Ovary (tissue), 10 donors: ENCODE measurements at regions of chr12 and their contacts with region 1.

Region 1: GRCh38 chr12:10212201-10213131 is at the start of gene GABARAPL1:
- DNase-seq: peak; percentile 97 to 98 (median 98)
- H3K4me3 ChIP-seq: peak within 1 kb of the TSS; percentile 89
- H3K27ac ChIP-seq: peak within 1 kb of the TSS; percentile 97 to 100
- H3K4me1 ChIP-seq: peaks cover 5% of the 10 kb centered on the region
- H3K27me3 ChIP-seq: no peaks in the 10 kb centered on the region
- CTCF ChIP-seq: peak in 1 of 3 donors; percentile 22
- EP300 ChIP-seq: peak; percentile 95
- POLR2A ChIP-seq: peak; percentile 68
- total RNA-seq, gene GABARAPL1: 53.1 to 139 (median 96.1) TPM

Region 2: GRCh38 chr12:8697476-8698131 is 1514.9 kb before region 1 on chr12 and contains the start of gene RIMKLB:
- intact Hi-C with region 1: loop called in 1 of 4 experiments (anchors 10 kb)
- DNase-seq: peak; percentile 89 to 94 (median 91)
- H3K4me3 ChIP-seq: peak within 1 kb of the TSS; percentile 81
- H3K27ac ChIP-seq: peak within 1 kb of the TSS; percentile 94 to 96
- H3K4me1 ChIP-seq: peaks cover 3% of the 10 kb centered on the region
- H3K27me3 ChIP-seq: no peaks in the 10 kb centered on the region
- CTCF ChIP-seq: no peak
- EP300 ChIP-seq: no peak
- POLR2A ChIP-seq: peak; percentile 82
- total RNA-seq, gene RIMKLB: 32.3 to 118 (median 42.6) TPM

Region 3: GRCh38 chr12:10721651-10722501 is 509.4 kb after region 1 on chr12:
- intact Hi-C with region 1: loop called in 2 of 4 experiments (anchors 1 to 10 kb)
- DNase-seq: peak; percentile 91 to 97 (median 95)
- H3K4me3 ChIP-seq: peak overlapping the region; percentile 93
- H3K27ac ChIP-seq: peak overlapping the region; percentile 99 to 100
- H3K4me1 ChIP-seq: peaks cover 10% of the 10 kb centered on the region
- H3K27me3 ChIP-seq: no peaks in the 10 kb centered on the region
- CTCF ChIP-seq: no peak
- EP300 ChIP-seq: peak; percentile 99
- POLR2A ChIP-seq: peak; percentile 47